ENCODE measurements at regions of chr17 and their contacts with region 1.

Region 1: GRCh38 chr17:38557836-38558727 is 47.7 kb downstream of the SRCIN1 start:
- DNase-seq: peak; percentile 91
- H3K4me3 Mint-ChIP-seq: peak overlapping the region; percentile 87
- H3K27ac Mint-ChIP-seq: no peak overlapping the region
- H3K4me1 Mint-ChIP-seq: peaks cover 30% of the 10 kb centered on the region
- H3K27me3 Mint-ChIP-seq: peaks cover 55% of the 10 kb centered on the region

Region 2: GRCh38 chr17:38509008-38509771 is 48.9 kb before region 1 on chr17:
- CTCF ChIA-PET with region 1: interaction called, 21 read pairs
- POLR2A ChIA-PET with region 1: no interaction called
- DNase-seq: peak; percentile 75
- H3K4me3 Mint-ChIP-seq: peak overlapping the region; percentile 55
- H3K27ac Mint-ChIP-seq: no peak overlapping the region
- H3K4me1 Mint-ChIP-seq: peaks cover 11% of the 10 kb centered on the region
- H3K27me3 Mint-ChIP-seq: peaks cover 39% of the 10 kb centered on the region

Region 3: GRCh38 chr17:38598536-38598935 is 40.5 kb after region 1 on chr17:
- CTCF ChIA-PET with region 1: interaction called, 14 read pairs
- POLR2A ChIA-PET with region 1: interaction called, 4 read pairs
- DNase-seq: no peak
- H3K4me3 Mint-ChIP-seq: no peak overlapping the region
- H3K27ac Mint-ChIP-seq: no peak overlapping the region
- H3K4me1 Mint-ChIP-seq: no peaks in the 10 kb centered on the region
- H3K27me3 Mint-ChIP-seq: peaks cover 94% of the 10 kb centered on the region

Region 4: DNA sequence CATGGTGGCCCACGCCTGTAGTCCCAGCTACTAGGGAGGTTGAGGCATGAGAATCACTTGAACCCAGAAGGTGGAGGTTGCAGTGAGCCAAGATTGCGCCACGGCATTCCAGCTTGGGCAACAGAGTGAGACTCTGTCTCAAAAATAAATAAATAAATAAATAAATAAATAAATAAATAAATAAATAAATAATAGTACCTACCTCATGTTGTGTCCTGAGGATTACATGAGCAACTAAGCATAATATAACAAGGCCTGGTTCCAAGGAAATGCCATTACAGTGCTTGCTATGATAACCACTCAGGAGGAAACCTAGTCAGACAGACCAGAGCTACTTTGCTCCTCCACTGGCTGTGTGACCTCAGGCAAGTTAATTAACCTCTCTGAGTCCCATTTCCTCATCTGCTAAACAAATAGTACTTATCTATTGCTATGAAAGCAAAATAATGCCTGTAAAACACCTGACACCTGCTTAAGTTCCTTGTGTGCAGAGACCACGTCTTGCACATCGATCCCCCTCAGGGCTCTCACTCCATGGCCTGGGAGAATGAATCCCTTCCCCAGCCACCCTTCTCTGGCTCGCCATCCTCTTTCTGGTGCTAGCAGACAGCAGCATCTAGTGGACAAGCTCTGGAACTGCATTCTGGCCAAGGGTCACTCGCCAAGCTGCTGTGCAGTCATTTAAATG is 109.2 kb after region 1 on chr17:
- CTCF ChIA-PET with region 1: interaction called, 217 read pairs
- POLR2A ChIA-PET with region 1: interaction called, 5 read pairs
- DNase-seq: peak; percentile 64
- H3K4me3 Mint-ChIP-seq: no peak overlapping the region
- H3K27ac Mint-ChIP-seq: no peak overlapping the region
- H3K4me1 Mint-ChIP-seq: peaks cover 10% of the 10 kb centered on the region
- H3K27me3 Mint-ChIP-seq: peaks cover 64% of the 10 kb centered on the region

Region 5: GRCh38 chr17:38735161-38735997 is 177.3 kb after region 1 on chr17:
- CTCF ChIA-PET with region 1: interaction called, 10 read pairs
- POLR2A ChIA-PET with region 1: interaction called, 5 read pairs
- DNase-seq: peak; percentile 74
- H3K4me3 Mint-ChIP-seq: no peak overlapping the region
- H3K27ac Mint-ChIP-seq: no peak overlapping the region
- H3K4me1 Mint-ChIP-seq: peaks cover 43% of the 10 kb centered on the region
- H3K27me3 Mint-ChIP-seq: peaks cover 3% of the 10 kb centered on the region